ENCODE measurements at regions of chr1 and their contacts with region 1.

Region 1: DNA sequence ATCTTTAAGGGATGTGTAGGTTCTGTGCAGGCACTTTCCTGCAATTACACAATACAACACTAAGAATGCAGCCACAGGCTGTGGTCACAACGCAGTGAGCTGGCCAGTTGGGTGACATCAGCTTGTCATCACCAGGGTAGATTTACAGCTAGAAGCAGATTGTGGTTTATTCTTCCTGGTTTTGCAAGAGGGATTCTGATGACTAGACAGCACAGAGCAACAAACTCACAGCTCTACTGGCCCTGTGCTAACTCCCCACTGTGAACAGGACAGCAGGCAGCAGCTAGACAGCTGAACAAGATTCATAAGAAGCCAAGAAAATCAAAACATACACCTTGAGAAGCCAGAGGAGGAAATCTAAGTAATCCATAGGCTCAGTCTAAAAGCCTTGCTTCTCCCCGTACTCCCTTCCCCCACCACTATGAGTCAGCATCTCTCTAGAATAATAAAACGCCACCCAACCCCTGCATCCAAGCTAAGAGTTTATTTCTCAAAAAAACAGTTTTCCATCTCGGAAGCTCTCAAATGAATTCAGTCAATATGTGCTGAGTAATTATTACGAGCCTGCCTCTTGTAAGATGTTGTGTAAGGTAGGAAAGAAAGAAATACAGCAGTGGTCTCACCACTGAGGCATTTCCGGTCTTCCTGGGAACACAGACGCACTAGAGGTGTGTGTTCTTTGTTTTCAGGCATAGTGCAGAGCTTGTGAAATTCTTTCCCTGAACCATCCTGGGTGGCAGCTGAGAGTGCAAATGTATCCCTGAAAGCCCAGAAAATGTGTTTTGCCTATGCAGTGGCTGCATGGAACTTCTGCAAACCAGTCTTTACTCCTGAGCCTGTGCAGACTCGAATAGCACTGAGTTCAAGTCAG is 162.8 kb downstream of the NTPCR start:
- DNase-seq: peak in 1 of 2 experiments; percentile 39
- H3K4me3 ChIP-seq: peak overlapping the region in 2 of 4 experiments; percentile 17 to 19; a peak in 2 of 8 replicates
- H3K27ac ChIP-seq: peak overlapping the region; percentile 94
- H3K4me1 ChIP-seq: peaks cover 10 to 30% (median 18%) of the 10 kb centered on the region in 4 experiments; a peak in 6 of 7 replicates
- H3K27me3 ChIP-seq: no peaks in the 10 kb centered on the region
- CTCF ChIP-seq: no peak
- EP300 ChIP-seq: no peak
- POLR2A ChIP-seq: peak in 1 of 2 experiments; percentile 51; a peak in 2 of 3 replicates
- RAD21 ChIP-seq: 0 out of 4 replicates have a peak, but pooled peaks of 1 of the 2 experiments have one; percentile 1

Region 2: DNA sequence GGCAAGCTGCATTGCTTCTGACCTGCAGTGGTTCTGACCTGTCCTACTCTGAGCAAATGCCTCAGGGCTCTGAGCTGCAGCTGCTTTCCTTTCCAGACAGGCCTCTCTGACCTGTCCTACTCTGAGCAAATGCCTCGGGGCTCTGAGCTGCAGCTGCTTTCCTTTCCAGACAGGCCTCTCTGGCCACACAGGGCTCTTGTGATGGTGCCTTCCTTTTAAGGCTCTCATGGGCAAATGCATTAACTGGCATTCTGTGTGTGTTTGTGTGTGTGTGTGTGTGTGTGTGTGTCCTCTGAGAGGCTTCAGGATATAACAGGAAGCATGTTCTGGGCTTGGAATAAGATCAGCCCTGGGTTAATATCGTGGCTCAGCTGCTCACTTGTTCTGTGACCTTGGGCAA is 31.5 kb before region 1 on chr1:
- CTCF ChIA-PET with region 1: no interaction called
- POLR2A ChIA-PET with region 1: interaction called, 11 read pairs
- DNase-seq: no peak
- H3K4me3 ChIP-seq: no peak overlapping the region
- H3K27ac ChIP-seq: no peak overlapping the region
- H3K4me1 ChIP-seq: peaks cover 0 to 4% (median 0%) of the 10 kb centered on the region in 4 experiments; a peak in 2 of 7 replicates
- H3K27me3 ChIP-seq: no peaks in the 10 kb centered on the region
- CTCF ChIP-seq: no peak
- EP300 ChIP-seq: no peak
- POLR2A ChIP-seq: no peak
- RAD21 ChIP-seq: no peak

Region 3: DNA sequence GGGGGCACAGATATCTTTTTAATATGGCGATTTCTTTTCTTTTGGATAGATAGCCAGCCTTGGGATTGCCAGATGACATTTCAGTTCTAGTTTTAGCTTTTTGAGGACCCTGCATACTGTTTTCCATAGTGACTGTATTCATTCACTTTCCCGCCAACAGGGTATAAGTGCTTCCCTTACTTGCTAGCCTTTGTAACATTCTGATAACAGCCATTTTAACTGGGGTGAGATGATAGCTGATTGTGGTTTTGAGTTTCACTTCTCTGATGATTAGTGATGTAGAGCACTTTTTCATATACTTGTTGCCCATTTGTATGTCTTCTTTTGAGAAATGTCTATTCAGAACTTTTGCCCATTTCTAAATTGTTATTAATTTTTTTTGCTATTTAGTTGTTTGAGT is 10.9 kb before region 1 on chr1:
- CTCF ChIA-PET with region 1: interaction called, 5 read pairs
- POLR2A ChIA-PET with region 1: interaction called, 11 read pairs
- DNase-seq: no peak
- H3K4me3 ChIP-seq: no peak overlapping the region
- H3K27ac ChIP-seq: no peak overlapping the region
- H3K4me1 ChIP-seq: no peaks in the 10 kb centered on the region
- H3K27me3 ChIP-seq: no peaks in the 10 kb centered on the region
- CTCF ChIP-seq: no peak
- EP300 ChIP-seq: no peak
- POLR2A ChIP-seq: no peak
- RAD21 ChIP-seq: no peak

Measured in H1 (cell line).